CD8-positive, alpha-beta T cell (primary cell): ENCODE measurements at regions of chr6 and their contacts with region 1.

Region 1: DNA sequence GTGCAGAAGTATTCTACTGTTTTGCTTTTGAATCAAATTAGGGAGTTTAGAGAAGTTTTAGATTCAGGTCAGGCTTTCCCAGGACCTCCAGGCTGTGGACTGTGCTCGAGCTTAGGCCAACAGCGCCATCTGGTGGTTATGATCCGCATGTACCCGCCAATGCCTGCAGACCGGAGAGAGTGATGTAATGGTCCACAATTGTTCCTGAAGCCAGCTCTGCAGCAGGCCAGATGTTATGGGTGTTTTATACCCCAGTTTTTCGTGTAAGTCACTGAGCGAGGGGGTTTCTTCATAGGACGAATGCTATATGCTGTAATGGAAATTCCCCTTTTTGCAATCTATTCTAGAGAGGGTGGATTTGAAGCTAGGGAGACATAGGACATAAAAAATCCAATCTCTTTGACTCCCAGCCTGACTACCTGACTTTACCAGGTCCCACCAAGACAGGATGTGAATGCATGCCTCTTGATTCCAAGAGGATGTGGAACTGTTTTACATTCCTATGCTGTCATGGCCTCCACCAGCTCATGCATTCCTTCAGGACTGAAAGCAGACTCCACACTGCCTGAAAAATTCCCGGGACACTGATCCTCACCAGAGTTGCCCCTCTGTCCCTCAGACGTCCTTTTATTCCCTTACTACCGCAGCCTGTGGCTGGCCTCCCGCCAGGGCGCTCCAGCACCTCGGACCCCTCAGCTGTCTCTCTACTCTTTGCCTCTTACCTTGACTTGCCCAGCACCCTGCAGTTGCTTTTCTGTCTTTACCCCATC is 41.2 kb upstream of the LY86 start:
- DNase-seq: peak; percentile 67 to 91 (median 82)
- ATAC-seq: peak; percentile 90
- H3K4me3 ChIP-seq: peak overlapping the region; percentile 42 to 48
- H3K4me3 Mint-ChIP-seq: peak overlapping the region; percentile 76
- H3K27ac ChIP-seq: no peak overlapping the region
- H3K27ac Mint-ChIP-seq: no peak overlapping the region
- H3K4me1 ChIP-seq: peaks cover 9% of the 10 kb centered on the region
- H3K4me1 Mint-ChIP-seq: peaks cover 3% of the 10 kb centered on the region
- H3K27me3 ChIP-seq: peaks cover 6 to 13% of the 10 kb centered on the region in 2 experiments
- H3K27me3 Mint-ChIP-seq: peaks cover 32% of the 10 kb centered on the region
- CTCF ChIP-seq: peak; percentile 95

Region 2: DNA sequence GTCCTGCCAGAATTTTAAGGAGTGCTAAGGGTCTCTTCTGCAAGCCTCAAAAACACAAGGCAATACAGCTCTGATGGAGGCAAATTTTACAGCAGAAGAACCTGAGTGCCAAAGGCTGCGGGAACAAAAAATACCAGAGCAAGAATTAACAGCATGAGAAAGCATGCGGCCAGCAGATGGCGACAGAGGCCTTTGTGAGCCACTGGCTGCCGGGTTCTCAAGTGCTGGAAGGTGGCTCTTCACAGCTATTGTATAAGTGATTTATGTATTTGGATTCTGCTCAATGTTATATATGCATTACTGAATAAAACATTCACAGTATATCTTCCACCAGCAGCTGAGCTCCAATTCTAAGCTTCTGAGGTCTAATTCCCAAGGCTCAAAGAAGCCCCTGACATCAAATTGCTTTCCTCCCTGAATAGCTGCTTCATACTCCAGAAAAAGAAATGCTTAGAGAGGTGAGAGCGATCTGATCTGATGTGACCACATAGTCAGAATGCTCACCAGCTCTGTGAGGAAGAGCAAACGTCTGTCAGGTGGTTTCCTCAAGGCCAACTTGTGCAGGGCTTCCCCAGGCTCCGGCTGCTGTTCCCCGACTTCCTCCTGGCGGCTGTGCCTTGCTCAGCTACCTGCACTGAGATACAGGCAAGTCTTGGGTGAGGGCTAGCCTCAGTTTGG is 1403.5 kb before region 1 on chr6:
- CTCF ChIA-PET with region 1: interaction called, 18 read pairs
- POLR2A ChIA-PET with region 1: no interaction called
- intact Hi-C with region 1: loop called in 1 of 2 experiments (anchors 1 kb)
- DNase-seq: peak; percentile 72 to 90 (median 84)
- ATAC-seq: peak; percentile 73
- H3K4me3 ChIP-seq: no peak overlapping the region
- H3K4me3 Mint-ChIP-seq: no peak overlapping the region
- H3K27ac ChIP-seq: no peak overlapping the region
- H3K27ac Mint-ChIP-seq: no peak overlapping the region
- H3K4me1 ChIP-seq: no peaks in the 10 kb centered on the region
- H3K4me1 Mint-ChIP-seq: peaks cover 2% of the 10 kb centered on the region
- H3K27me3 ChIP-seq: no peaks in the 10 kb centered on the region
- H3K27me3 Mint-ChIP-seq: no peaks in the 10 kb centered on the region
- CTCF ChIP-seq: peak; percentile 98

Region 3: GRCh38 chr6:5813625-5814027 is 733.7 kb before region 1 on chr6:
- CTCF ChIA-PET with region 1: interaction called, 4 read pairs
- POLR2A ChIA-PET with region 1: no interaction called
- intact Hi-C with region 1: loop called in 1 of 2 experiments (anchors 10 kb)
- DNase-seq: peak in 1 of 9 experiments; percentile 41
- ATAC-seq: no peak
- H3K4me3 ChIP-seq: no peak overlapping the region
- H3K4me3 Mint-ChIP-seq: peak overlapping the region; percentile 19
- H3K27ac ChIP-seq: peak overlapping the region in 1 of 2 experiments; percentile 12
- H3K27ac Mint-ChIP-seq: peak overlapping the region; percentile 60
- H3K4me1 ChIP-seq: peaks cover 18% of the 10 kb centered on the region
- H3K4me1 Mint-ChIP-seq: peaks cover 25% of the 10 kb centered on the region
- H3K27me3 ChIP-seq: no peaks in the 10 kb centered on the region
- H3K27me3 Mint-ChIP-seq: no peaks in the 10 kb centered on the region
- CTCF ChIP-seq: no peak

Region 4: GRCh38 chr6:6057424-6058053 is 489.8 kb before region 1 on chr6:
- CTCF ChIA-PET with region 1: interaction called, 59 read pairs
- POLR2A ChIA-PET with region 1: no interaction called
- intact Hi-C with region 1: loop called in 1 of 2 experiments (anchors 1 kb)
- DNase-seq: peak in 2 of 9 experiments; percentile 46 to 68
- ATAC-seq: no peak
- H3K4me3 ChIP-seq: no peak overlapping the region
- H3K4me3 Mint-ChIP-seq: no peak overlapping the region
- H3K27ac ChIP-seq: no peak overlapping the region
- H3K27ac Mint-ChIP-seq: no peak overlapping the region
- H3K4me1 ChIP-seq: no peaks in the 10 kb centered on the region
- H3K4me1 Mint-ChIP-seq: no peaks in the 10 kb centered on the region
- H3K27me3 ChIP-seq: no peaks in the 10 kb centered on the region
- H3K27me3 Mint-ChIP-seq: peaks cover 43% of the 10 kb centered on the region
- CTCF ChIP-seq: no peak

Region 5: DNA sequence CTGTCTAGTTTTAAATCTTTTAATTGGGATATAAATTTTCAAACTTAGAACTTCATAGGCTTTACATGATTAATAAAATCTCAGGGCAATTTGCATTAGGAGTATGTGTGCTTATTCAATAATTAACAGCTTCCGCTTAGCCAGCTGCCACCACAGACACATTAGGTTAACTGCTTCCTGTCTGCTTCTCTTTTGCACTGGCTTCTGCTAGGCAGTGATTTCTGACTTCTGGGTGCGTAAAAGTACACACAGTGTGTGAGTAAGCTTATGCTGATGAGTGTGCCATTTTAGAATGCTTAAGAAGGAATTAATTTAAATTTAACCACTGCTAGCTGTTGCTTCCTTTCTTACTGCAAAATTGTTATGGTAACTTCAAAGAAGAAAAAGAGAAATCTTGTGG is 300.8 kb before region 1 on chr6:
- CTCF ChIA-PET with region 1: no interaction called
- POLR2A ChIA-PET with region 1: no interaction called
- intact Hi-C with region 1: loop called in 1 of 2 experiments (anchors 5 kb)
- DNase-seq: no peak
- ATAC-seq: no peak
- H3K4me3 ChIP-seq: no peak overlapping the region
- H3K4me3 Mint-ChIP-seq: no peak overlapping the region
- H3K27ac ChIP-seq: no peak overlapping the region
- H3K27ac Mint-ChIP-seq: no peak overlapping the region
- H3K4me1 ChIP-seq: no peaks in the 10 kb centered on the region
- H3K4me1 Mint-ChIP-seq: no peaks in the 10 kb centered on the region
- H3K27me3 ChIP-seq: peaks cover 0 to 2% of the 10 kb centered on the region in 2 experiments
- H3K27me3 Mint-ChIP-seq: peaks cover 28% of the 10 kb centered on the region
- CTCF ChIP-seq: no peak

Region 6: DNA sequence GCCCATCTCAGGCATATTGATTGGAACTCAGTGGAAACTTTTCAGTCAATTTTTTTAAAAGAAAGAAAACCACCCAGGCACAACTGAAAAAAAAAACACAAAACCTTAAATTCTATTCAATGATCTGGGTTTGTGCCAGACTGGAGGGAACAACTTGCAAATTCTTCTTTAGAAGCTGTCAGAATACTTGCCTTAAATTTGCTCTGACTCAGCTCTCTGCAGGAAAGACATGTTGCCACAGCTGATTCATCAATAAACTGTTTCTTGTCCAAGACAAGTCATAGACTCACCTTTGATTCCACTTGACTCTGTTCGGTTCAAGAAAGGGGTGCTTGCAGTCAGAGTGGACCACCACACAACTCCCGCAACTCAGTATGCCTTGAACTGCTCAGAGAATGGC is 109.0 kb before region 1 on chr6:
- CTCF ChIA-PET with region 1: no interaction called
- POLR2A ChIA-PET with region 1: no interaction called
- intact Hi-C with region 1: no loop called
- DNase-seq: no peak
- ATAC-seq: no peak
- H3K4me3 ChIP-seq: no peak overlapping the region
- H3K4me3 Mint-ChIP-seq: no peak overlapping the region
- H3K27ac ChIP-seq: no peak overlapping the region
- H3K27ac Mint-ChIP-seq: no peak overlapping the region
- H3K4me1 ChIP-seq: no peaks in the 10 kb centered on the region
- H3K4me1 Mint-ChIP-seq: no peaks in the 10 kb centered on the region
- H3K27me3 ChIP-seq: no peaks in the 10 kb centered on the region
- H3K27me3 Mint-ChIP-seq: no peaks in the 10 kb centered on the region
- CTCF ChIP-seq: no peak

Region 7: DNA sequence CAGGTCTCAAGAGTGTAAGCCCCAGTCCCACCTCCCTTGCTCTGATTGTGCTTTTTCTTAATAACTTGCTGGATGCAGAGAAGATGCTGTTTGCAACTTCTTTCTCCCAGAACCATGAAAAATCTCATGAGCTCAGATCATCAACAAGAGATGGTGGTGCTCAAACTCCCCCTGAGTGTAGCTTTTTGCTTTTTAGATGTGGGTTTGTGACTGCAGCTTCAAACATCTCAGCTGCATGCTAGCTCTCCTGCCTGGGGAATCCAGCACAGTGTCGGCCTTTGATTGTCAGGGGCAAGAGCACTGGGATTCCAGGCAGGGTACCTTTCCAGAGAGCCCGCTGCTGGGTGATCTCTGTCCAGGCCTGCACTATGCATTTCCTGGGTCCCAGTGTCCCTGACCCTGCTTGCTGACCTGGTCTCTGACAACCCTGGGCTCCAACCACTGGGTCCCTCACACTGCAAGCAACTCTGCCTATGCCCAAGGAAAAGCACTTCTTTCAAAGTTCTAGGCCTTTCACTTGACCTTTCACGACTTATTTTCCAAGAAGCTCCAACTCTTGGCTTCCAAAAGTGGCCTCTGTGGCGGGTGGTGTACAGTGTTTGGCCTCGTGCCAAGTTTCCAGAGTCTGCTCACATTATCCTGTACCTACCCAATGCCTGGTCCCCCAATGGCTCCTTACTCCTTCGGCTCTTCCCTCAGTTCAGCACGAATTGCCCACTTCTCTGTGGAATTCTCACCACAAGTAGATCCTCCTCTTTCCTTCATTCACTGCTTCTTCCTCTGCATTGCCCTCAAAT is 28.5 kb before region 1 on chr6:
- CTCF ChIA-PET with region 1: interaction called, 10 read pairs
- POLR2A ChIA-PET with region 1: no interaction called
- intact Hi-C with region 1: loop called in 1 of 2 experiments (anchors 2 kb)
- DNase-seq: peak in 4 of 9 experiments; percentile 17 to 76 (median 37)
- ATAC-seq: peak; percentile 56
- H3K4me3 ChIP-seq: peak overlapping the region in 1 of 2 experiments; percentile 37
- H3K4me3 Mint-ChIP-seq: peak overlapping the region; percentile 68
- H3K27ac ChIP-seq: peak overlapping the region in 1 of 2 experiments; percentile 39
- H3K27ac Mint-ChIP-seq: peak overlapping the region; percentile 87
- H3K4me1 ChIP-seq: peaks cover 48% of the 10 kb centered on the region
- H3K4me1 Mint-ChIP-seq: peaks cover 60% of the 10 kb centered on the region
- H3K27me3 ChIP-seq: no peaks in the 10 kb centered on the region
- H3K27me3 Mint-ChIP-seq: peaks cover 12% of the 10 kb centered on the region
- CTCF ChIP-seq: no peak

Region 8: GRCh38 chr6:6661684-6662083 is 114.4 kb after region 1 on chr6:
- CTCF ChIA-PET with region 1: no interaction called
- POLR2A ChIA-PET with region 1: no interaction called
- intact Hi-C with region 1: no loop called
- DNase-seq: no peak
- ATAC-seq: no peak
- H3K4me3 ChIP-seq: no peak overlapping the region
- H3K4me3 Mint-ChIP-seq: no peak overlapping the region
- H3K27ac ChIP-seq: no peak overlapping the region
- H3K27ac Mint-ChIP-seq: no peak overlapping the region
- H3K4me1 ChIP-seq: peaks cover 34% of the 10 kb centered on the region
- H3K4me1 Mint-ChIP-seq: peaks cover 56% of the 10 kb centered on the region
- H3K27me3 ChIP-seq: no peaks in the 10 kb centered on the region
- H3K27me3 Mint-ChIP-seq: no peaks in the 10 kb centered on the region
- CTCF ChIP-seq: no peak

Region 9: GRCh38 chr6:7341989-7342742 is 794.9 kb after region 1 on chr6:
- CTCF ChIA-PET with region 1: no interaction called
- POLR2A ChIA-PET with region 1: no interaction called
- intact Hi-C with region 1: no loop called
- DNase-seq: no peak
- ATAC-seq: no peak
- H3K4me3 ChIP-seq: no peak overlapping the region
- H3K4me3 Mint-ChIP-seq: no peak overlapping the region
- H3K27ac ChIP-seq: no peak overlapping the region
- H3K27ac Mint-ChIP-seq: no peak overlapping the region
- H3K4me1 ChIP-seq: no peaks in the 10 kb centered on the region
- H3K4me1 Mint-ChIP-seq: peaks cover 8% of the 10 kb centered on the region
- H3K27me3 ChIP-seq: no peaks in the 10 kb centered on the region
- H3K27me3 Mint-ChIP-seq: peaks cover 22% of the 10 kb centered on the region
- CTCF ChIP-seq: no peak